Left ventricle myocardium inferior (tissue), 1 donor: ENCODE measurements at regions of chr11 and their contacts with region 1.

Region 1: GRCh38 chr11:112588252-112588694 is 327.6 kb upstream of the PLET1 start:
- DNase-seq: peak; percentile 35
- H3K4me3 ChIP-seq: no peak overlapping the region
- H3K27ac ChIP-seq: no peak overlapping the region
- H3K4me1 ChIP-seq: peaks cover 6% of the 10 kb centered on the region
- H3K27me3 ChIP-seq: no peaks in the 10 kb centered on the region
- CTCF ChIP-seq: peak; percentile 80

Region 2: GRCh38 chr11:112795142-112795815 is 207.0 kb after region 1 on chr11:
- intact Hi-C with region 1: loop called (anchors 10 kb)
- DNase-seq: no peak
- H3K4me3 ChIP-seq: no peak overlapping the region
- H3K27ac ChIP-seq: peak overlapping the region; percentile 16
- H3K4me1 ChIP-seq: peaks cover 38% of the 10 kb centered on the region
- H3K27me3 ChIP-seq: no peaks in the 10 kb centered on the region
- CTCF ChIP-seq: peak; percentile 65

Region 3: GRCh38 chr11:113289431-113290187 is 701.3 kb after region 1 on chr11:
- intact Hi-C with region 1: loop called (anchors 5 kb)
- DNase-seq: peak; percentile 46
- H3K4me3 ChIP-seq: no peak overlapping the region
- H3K27ac ChIP-seq: no peak overlapping the region
- H3K4me1 ChIP-seq: peaks cover 16% of the 10 kb centered on the region
- H3K27me3 ChIP-seq: peaks cover 9% of the 10 kb centered on the region
- CTCF ChIP-seq: peak; percentile 96